B cell (primary cell): ENCODE measurements at regions of chr19 and their contacts with region 1.

Region 1: DNA sequence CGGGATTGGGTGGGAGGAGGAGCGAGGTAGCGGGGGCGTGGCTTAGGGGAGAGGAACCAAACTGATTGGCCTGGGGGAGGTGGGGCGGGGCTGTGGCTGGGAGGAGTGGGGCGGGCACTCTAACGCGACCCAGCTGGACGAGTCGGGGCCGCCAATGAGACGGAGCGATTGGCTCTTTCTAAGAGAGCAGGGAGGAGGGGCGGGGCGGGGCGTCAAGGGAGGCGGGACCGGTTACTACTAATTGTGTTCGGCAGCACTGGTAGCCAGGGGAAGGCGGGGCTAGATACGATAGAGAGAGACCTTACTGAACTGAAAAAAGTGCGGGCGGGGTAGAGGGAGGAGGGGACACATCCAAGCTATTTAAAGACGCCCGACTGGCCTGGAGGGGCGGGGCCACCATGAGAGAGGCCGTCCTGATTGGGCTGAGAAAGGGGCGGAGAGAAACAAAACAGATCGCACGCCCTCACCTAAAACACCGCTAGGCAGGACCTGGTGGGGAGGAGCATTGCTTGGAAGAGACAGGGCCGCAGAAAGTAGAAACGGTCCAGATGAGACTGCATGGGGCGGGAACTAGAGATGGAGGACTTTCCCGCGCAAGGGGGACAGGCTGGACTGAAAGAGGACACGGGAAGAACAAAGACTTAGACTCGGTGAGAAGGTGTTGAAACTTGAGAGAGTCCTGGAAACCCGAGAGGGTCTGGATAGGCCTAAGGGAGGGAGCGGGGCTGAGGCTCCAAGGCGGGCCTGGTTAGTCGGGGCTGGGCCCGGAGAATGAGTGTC is at the start of gene KCNC3:
- DNase-seq: peak; percentile 99
- ATAC-seq: peak; percentile 64
- H3K4me3 ChIP-seq: peak within 1 kb of the TSS in 4 of 5 experiments; percentile 41 to 71 (median 56)
- H3K4me3 Mint-ChIP-seq: peak within 1 kb of the TSS; percentile 91
- H3K27ac ChIP-seq: peak within 1 kb of the TSS; percentile 50 to 77
- H3K27ac Mint-ChIP-seq: peak within 1 kb of the TSS; percentile 94
- H3K4me1 ChIP-seq: peaks cover 62 to 80% of the 10 kb centered on the region in 2 donors
- H3K4me1 Mint-ChIP-seq: peaks cover 79% of the 10 kb centered on the region
- H3K27me3 ChIP-seq: peaks cover 0 to 9% (median 2%) of the 10 kb centered on the region in 4 experiments
- H3K27me3 Mint-ChIP-seq: peaks cover 12% of the 10 kb centered on the region
- CTCF ChIP-seq: no peak
- total RNA-seq, gene KCNC3: 23.0 and 24.4 TPM in 2 replicates

Region 2: DNA sequence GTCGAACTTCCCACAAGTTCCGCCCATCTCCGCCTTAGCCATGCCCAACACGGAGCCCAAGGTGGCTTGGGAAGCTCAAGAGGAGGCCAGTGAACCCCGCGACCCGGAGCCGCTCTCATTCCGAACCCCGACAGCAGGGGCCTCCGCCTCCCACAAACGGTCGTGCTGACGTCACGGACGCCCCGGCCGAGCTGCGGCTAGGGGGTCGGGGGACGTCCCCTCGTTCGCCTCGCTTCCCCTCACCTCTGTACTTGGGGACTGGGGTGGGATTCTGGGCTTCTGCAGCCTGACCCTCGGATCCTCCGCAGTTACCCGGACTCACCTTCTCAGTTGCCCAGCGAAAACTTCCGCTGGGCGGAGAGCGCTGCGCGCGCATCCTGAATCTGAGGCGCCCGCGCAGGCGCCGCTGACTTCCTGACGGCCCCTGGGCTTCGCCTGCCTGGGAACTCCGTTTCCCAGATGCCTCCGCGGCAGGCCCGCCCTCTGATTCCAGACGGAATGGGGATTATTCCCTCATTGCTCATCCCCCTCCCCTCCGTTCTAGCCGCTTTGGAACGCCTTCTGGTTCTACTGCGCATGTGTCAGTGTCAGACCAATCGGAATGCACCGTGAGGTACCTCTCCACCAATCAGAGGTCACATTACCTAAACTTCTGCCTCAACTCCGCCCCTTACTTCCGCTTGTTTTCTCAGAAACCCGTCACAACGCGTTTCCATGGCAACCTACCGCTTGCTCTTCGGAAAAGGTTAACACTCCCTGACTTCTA is 304.1 kb before region 1 on chr19 and contains the start of gene VRK3:
- CTCF ChIA-PET with region 1: no interaction called
- POLR2A ChIA-PET with region 1: no interaction called
- intact Hi-C with region 1: loop called (anchors 2 kb)
- DNase-seq: peak; percentile 100
- ATAC-seq: peak; percentile 86
- H3K4me3 ChIP-seq: peak within 1 kb of the TSS; percentile 76 to 96 (median 94)
- H3K4me3 Mint-ChIP-seq: peak within 1 kb of the TSS; percentile 94
- H3K27ac ChIP-seq: peak within 1 kb of the TSS; percentile 96 to 98
- H3K27ac Mint-ChIP-seq: peak within 1 kb of the TSS; percentile 97
- H3K4me1 ChIP-seq: peaks cover 15 to 36% of the 10 kb centered on the region in 2 donors
- H3K4me1 Mint-ChIP-seq: peaks cover 41% of the 10 kb centered on the region
- H3K27me3 ChIP-seq: no peaks in the 10 kb centered on the region
- H3K27me3 Mint-ChIP-seq: no peaks in the 10 kb centered on the region
- CTCF ChIP-seq: no peak
- total RNA-seq, gene VRK3: 112 and 123 TPM in 2 replicates

Region 3: DNA sequence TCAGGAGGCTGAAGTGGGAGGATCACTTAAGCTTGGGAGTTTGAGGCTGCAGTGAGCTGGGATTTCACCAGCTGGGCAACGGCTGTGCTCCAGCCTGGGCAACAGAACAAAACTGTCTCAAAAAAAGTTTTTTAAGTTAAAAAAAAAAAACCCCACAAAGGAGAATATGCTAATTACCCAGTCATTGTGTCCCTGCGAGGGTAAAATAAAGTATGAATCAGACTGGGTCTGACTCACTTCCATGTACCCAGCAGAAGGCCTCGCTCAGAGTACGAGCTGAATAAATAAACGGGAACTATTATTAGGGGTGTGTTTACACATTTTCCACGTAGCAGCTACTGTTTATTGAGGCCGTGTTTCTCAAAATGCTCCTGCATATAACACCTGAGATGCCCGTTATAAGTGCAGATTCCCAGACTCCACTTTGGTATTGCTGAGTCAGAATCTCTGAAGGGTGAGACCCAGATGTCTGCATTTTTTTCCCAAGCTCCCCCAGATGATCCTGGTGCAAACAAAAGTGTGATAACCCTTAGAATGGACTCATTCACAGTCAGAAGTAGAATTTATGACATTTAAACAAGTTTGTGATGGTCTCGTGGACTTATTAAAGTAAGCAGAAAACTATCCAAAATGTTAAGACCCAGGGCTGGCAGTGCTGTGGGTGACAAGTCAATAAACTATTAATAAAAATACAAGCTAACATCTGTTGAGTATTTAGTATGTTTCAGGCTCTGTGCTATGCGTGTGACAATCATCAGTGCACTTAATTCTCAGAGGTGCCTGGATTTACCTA is 28.3 kb before region 1 on chr19:
- CTCF ChIA-PET with region 1: no interaction called
- POLR2A ChIA-PET with region 1: interaction called, 16 read pairs
- intact Hi-C with region 1: no loop called
- DNase-seq: no peak
- ATAC-seq: no peak
- H3K4me3 ChIP-seq: no peak overlapping the region
- H3K4me3 Mint-ChIP-seq: no peak overlapping the region
- H3K27ac ChIP-seq: no peak overlapping the region
- H3K27ac Mint-ChIP-seq: no peak overlapping the region
- H3K4me1 ChIP-seq: no peaks in the 10 kb centered on the region
- H3K4me1 Mint-ChIP-seq: no peaks in the 10 kb centered on the region
- H3K27me3 ChIP-seq: peaks cover 0 to 8% (median 1%) of the 10 kb centered on the region in 4 experiments
- H3K27me3 Mint-ChIP-seq: peaks cover 32% of the 10 kb centered on the region
- CTCF ChIP-seq: no peak

Region 4: GRCh38 chr19:50349277-50350057 is 20.1 kb after region 1 on chr19:
- CTCF ChIA-PET with region 1: interaction called, 45 read pairs
- POLR2A ChIA-PET with region 1: interaction called, 122 read pairs
- intact Hi-C with region 1: loop called (anchors 1 kb)
- DNase-seq: no peak
- ATAC-seq: no peak
- H3K4me3 ChIP-seq: no peak overlapping the region
- H3K4me3 Mint-ChIP-seq: no peak overlapping the region
- H3K27ac ChIP-seq: peak overlapping the region in 1 of 2 donors; percentile 91
- H3K27ac Mint-ChIP-seq: peak overlapping the region; percentile 96
- H3K4me1 ChIP-seq: peaks cover 61 to 69% of the 10 kb centered on the region in 2 donors
- H3K4me1 Mint-ChIP-seq: peaks cover 57% of the 10 kb centered on the region
- H3K27me3 ChIP-seq: no peaks in the 10 kb centered on the region
- H3K27me3 Mint-ChIP-seq: no peaks in the 10 kb centered on the region
- CTCF ChIP-seq: no peak

Region 5: GRCh38 chr19:50511068-50511822 is 181.9 kb after region 1 on chr19 and contains the start of gene JOSD2:
- CTCF ChIA-PET with region 1: interaction called, 3 read pairs
- POLR2A ChIA-PET with region 1: interaction called, 10 read pairs
- intact Hi-C with region 1: no loop called
- DNase-seq: peak; percentile 99
- ATAC-seq: peak; percentile 94
- H3K4me3 ChIP-seq: peak within 1 kb of the TSS; percentile 19 to 84 (median 62)
- H3K4me3 Mint-ChIP-seq: peak within 1 kb of the TSS; percentile 96
- H3K27ac ChIP-seq: peak within 1 kb of the TSS; percentile 87 to 98
- H3K27ac Mint-ChIP-seq: peak within 1 kb of the TSS; percentile 100
- H3K4me1 ChIP-seq: peaks cover 14 to 20% of the 10 kb centered on the region in 2 donors
- H3K4me1 Mint-ChIP-seq: peaks cover 17% of the 10 kb centered on the region
- H3K27me3 ChIP-seq: peaks cover 0 to 25% (median 2%) of the 10 kb centered on the region in 4 experiments
- H3K27me3 Mint-ChIP-seq: peaks cover 3% of the 10 kb centered on the region
- CTCF ChIP-seq: no peak
- total RNA-seq, gene JOSD2: 32.8 TPM in 2 replicates